ENCODE measurements at regions of chr10 and their contacts with region 1.

Region 1: GRCh38 chr10:51524041-51524440 is 175.4 kb downstream of the CSTF2T start:
- DNase-seq: peak; percentile 48
- ATAC-seq: no peak; the same call in 1 of the 2 replicates
- H3K4me3 ChIP-seq: no peak overlapping the region
- H3K27ac ChIP-seq: no peak overlapping the region
- H3K4me1 ChIP-seq: no peaks in the 10 kb centered on the region
- H3K27me3 ChIP-seq: peaks cover 17% of the 10 kb centered on the region
- CTCF ChIP-seq: no peak

Region 2: DNA sequence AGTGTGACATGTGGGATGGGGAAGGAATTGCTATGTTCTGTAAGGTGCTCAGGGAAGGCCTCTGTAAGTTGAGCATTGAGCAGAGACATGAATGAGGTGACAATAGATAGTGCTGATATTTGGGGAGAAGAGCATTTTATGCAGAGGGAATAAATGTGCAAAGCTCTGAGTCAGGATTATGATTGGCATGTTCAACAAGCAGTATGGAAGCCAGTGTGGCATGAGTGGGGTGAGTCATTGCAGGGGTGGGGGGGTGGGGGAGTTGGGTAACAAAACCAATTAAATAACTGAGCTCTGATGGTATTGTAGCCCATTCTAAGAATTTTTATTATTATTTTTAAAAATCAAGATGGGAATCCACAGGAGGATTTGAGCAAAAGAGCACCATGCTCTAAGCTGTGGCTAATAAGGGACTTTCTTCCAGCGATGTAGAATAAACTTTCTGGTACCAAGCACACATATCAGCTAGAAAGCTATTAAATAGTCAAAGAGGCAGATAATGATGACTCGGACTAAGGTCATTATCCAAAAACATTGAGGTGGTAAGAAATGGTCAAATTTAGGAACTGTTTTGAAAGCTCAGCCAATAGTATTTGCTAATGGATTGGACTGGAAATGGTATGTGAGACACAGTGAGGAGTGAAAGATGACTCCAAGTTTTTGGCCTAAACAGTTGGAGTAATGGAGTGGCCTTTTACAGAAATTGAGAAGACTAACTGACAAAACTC is 353.4 kb before region 1 on chr10:
- CTCF ChIA-PET with region 1: interaction called, 11 read pairs
- POLR2A ChIA-PET with region 1: no interaction called
- intact Hi-C with region 1: no loop called
- DNase-seq: peak; percentile 87
- ATAC-seq: peak; percentile 75
- H3K4me3 ChIP-seq: no peak overlapping the region
- H3K27ac ChIP-seq: peak overlapping the region; percentile 2
- H3K4me1 ChIP-seq: peaks cover 31% of the 10 kb centered on the region
- H3K27me3 ChIP-seq: no peaks in the 10 kb centered on the region
- CTCF ChIP-seq: no peak